ENCODE measurements at regions of chr9 and their contacts with region 1.

Region 1: DNA sequence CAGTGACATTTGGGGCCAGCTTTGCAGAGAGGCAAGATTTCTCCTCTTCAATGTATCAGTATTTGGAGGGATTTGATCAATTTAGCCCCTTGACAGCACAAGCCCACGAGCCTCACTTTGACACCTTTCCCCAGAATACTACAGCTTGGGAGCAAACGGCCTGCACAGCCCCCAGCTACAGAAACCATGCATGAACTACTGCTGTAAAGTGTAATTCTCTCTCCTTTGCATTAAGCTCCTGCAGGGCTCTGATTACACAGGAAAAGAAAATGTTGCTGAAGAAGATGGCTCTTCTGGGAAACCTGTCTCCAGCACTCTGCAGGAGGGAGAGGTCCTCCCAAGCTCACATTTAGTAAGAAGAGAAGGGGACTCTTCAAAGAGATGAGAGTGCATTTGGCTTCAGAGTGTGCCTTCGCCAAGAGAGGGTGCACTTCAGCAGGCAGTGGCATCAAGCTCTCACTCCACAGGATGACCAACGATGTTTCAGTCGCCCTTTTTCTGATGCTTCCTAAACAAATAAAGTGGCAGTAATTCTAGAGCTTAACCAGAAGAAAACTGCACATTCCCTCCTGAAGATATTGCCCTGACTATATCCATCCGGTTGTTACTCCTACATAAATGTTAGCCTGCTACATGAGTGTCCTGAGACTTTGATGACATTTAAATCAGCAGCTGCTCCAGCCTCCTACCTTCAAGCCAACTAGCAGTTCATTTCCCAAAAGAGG is 272.2 kb downstream of the AUH start:
- DNase-seq: peak; percentile 46
- H3K4me3 Mint-ChIP-seq: no peak overlapping the region
- H3K27ac Mint-ChIP-seq: no peak overlapping the region
- H3K4me1 Mint-ChIP-seq: peaks cover 17% of the 10 kb centered on the region
- H3K27me3 Mint-ChIP-seq: peaks cover 29% of the 10 kb centered on the region

Region 2: DNA sequence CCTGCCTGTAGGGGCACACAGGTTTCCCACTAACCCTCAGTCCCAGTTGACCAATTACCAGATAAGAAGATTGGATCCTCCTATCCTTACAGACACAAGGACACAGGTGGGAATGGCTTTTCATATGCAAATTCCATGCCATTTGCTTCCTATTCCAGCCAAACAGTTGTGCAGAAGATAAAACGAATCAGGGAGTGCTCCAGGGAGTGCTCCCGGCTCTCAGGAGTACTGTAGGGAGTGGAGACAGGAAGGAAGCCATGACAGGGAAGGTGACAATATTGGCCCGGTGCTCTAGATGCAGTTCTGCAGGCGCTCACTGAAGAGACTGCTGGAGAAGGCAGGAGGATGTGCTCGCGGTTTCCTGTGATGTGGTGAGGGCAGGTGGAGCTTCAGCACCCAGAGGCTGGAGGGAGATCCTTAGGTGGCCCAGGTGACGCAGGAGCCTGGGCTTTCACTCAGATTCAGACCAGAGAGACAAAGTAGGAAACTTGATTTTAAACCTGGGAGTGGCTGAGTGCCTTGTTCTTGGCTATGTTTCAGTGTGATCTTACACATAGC is 12.1 kb after region 1 on chr9:
- CTCF ChIA-PET with region 1: interaction called, 24 read pairs
- DNase-seq: peak; percentile 97
- H3K4me3 Mint-ChIP-seq: peak overlapping the region; percentile 32
- H3K27ac Mint-ChIP-seq: peak overlapping the region; percentile 68
- H3K4me1 Mint-ChIP-seq: peaks cover 56% of the 10 kb centered on the region
- H3K27me3 Mint-ChIP-seq: peaks cover 41% of the 10 kb centered on the region

Region 3: GRCh38 chr9:91138760-91139159 is 49.2 kb after region 1 on chr9:
- CTCF ChIA-PET with region 1: no interaction called
- DNase-seq: no peak
- H3K4me3 Mint-ChIP-seq: no peak overlapping the region
- H3K27ac Mint-ChIP-seq: no peak overlapping the region
- H3K4me1 Mint-ChIP-seq: peaks cover 9% of the 10 kb centered on the region
- H3K27me3 Mint-ChIP-seq: peaks cover 22% of the 10 kb centered on the region

Region 4: GRCh38 chr9:91253488-91253887 is 163.9 kb after region 1 on chr9:
- CTCF ChIA-PET with region 1: interaction called, 17 read pairs
- DNase-seq: peak; percentile 67
- H3K4me3 Mint-ChIP-seq: no peak overlapping the region
- H3K27ac Mint-ChIP-seq: no peak overlapping the region
- H3K4me1 Mint-ChIP-seq: peaks cover 20% of the 10 kb centered on the region
- H3K27me3 Mint-ChIP-seq: no peaks in the 10 kb centered on the region

Region 5: GRCh38 chr9:91422758-91423711 is 333.5 kb after region 1 on chr9:
- CTCF ChIA-PET with region 1: interaction called, 34 read pairs
- DNase-seq: peak; percentile 76
- H3K4me3 Mint-ChIP-seq: peak overlapping the region; percentile 92
- H3K27ac Mint-ChIP-seq: peak overlapping the region; percentile 90
- H3K4me1 Mint-ChIP-seq: peaks cover 64% of the 10 kb centered on the region
- H3K27me3 Mint-ChIP-seq: peaks cover 52% of the 10 kb centered on the region

Measured in activated naive CD4-positive, alpha-beta T cell treated with anti-CD3 and anti-CD28 coated beads, Interleukin-2, amount 10 ng/mL, durations not matched to agents 7 days and 5 days (primary cell).